ENCODE measurements at regions of chr18 and their contacts with region 1.

Region 1: GRCh38 chr18:11005528-11005927 is 143.8 kb downstream of the PIEZO2 start:
- DNase-seq: peak; percentile 99
- ATAC-seq: peak; percentile 99
- H3K4me3 ChIP-seq: peak overlapping the region; percentile 28 to 59 (median 52); a peak in 5 of 6 replicates
- H3K27ac ChIP-seq: peak overlapping the region; percentile 93
- H3K4me1 ChIP-seq: peaks cover 74% of the 10 kb centered on the region
- H3K27me3 ChIP-seq: no peaks in the 10 kb centered on the region
- CTCF ChIP-seq: no peak
- EP300 ChIP-seq: peak; percentile 97 to 98
- POLR2A ChIP-seq: peak; percentile 61 to 79; a peak in 3 of 4 replicates
- RAD21 ChIP-seq: 0 out of 2 replicates have a peak, but pooled peaks have one; percentile 41

Region 2: GRCh38 chr18:10900435-10900834 is 105.1 kb before region 1 on chr18:
- CTCF ChIA-PET with region 1: no interaction called
- POLR2A ChIA-PET with region 1: no interaction called
- in situ Hi-C with region 1: no loop called
- intact Hi-C with region 1: loop called (anchors 5 kb)
- DNase-seq: peak; percentile 77
- ATAC-seq: peak; percentile 82
- H3K4me3 ChIP-seq: peak overlapping the region in 1 of 3 experiments; percentile 13; a peak in 1 of 6 replicates
- H3K27ac ChIP-seq: peak overlapping the region; percentile 73
- H3K4me1 ChIP-seq: peaks cover 53% of the 10 kb centered on the region
- H3K27me3 ChIP-seq: no peaks in the 10 kb centered on the region
- CTCF ChIP-seq: no peak
- EP300 ChIP-seq: no peak
- POLR2A ChIP-seq: no peak
- RAD21 ChIP-seq: no peak

Region 3: GRCh38 chr18:11125492-11126315 is 120.2 kb after region 1 on chr18:
- CTCF ChIA-PET with region 1: no interaction called
- POLR2A ChIA-PET with region 1: no interaction called
- in situ Hi-C with region 1: no loop called
- intact Hi-C with region 1: no loop called
- DNase-seq: no peak
- ATAC-seq: peak; percentile 47; the same call in 1 of the 3 replicates
- H3K4me3 ChIP-seq: no peak overlapping the region
- H3K27ac ChIP-seq: no peak overlapping the region
- H3K4me1 ChIP-seq: peaks cover 50% of the 10 kb centered on the region
- H3K27me3 ChIP-seq: no peaks in the 10 kb centered on the region
- CTCF ChIP-seq: no peak
- EP300 ChIP-seq: no peak
- POLR2A ChIP-seq: no peak
- RAD21 ChIP-seq: no peak

Measured in HepG2 (cell line).